ENCODE measurements at regions of chr4 and their contacts with region 1.

Region 1: GRCh38 chr4:158856852-158857251 is 88.0 kb downstream of the FNIP2 start:
- DNase-seq: peak; percentile 52
- ATAC-seq: peak; percentile 88
- H3K4me3 ChIP-seq: no peak overlapping the region
- H3K27ac ChIP-seq: no peak overlapping the region
- H3K4me1 ChIP-seq: peaks cover 23% of the 10 kb centered on the region
- H3K27me3 ChIP-seq: no peaks in the 10 kb centered on the region
- CTCF ChIP-seq: peak; percentile 69

Region 2: DNA sequence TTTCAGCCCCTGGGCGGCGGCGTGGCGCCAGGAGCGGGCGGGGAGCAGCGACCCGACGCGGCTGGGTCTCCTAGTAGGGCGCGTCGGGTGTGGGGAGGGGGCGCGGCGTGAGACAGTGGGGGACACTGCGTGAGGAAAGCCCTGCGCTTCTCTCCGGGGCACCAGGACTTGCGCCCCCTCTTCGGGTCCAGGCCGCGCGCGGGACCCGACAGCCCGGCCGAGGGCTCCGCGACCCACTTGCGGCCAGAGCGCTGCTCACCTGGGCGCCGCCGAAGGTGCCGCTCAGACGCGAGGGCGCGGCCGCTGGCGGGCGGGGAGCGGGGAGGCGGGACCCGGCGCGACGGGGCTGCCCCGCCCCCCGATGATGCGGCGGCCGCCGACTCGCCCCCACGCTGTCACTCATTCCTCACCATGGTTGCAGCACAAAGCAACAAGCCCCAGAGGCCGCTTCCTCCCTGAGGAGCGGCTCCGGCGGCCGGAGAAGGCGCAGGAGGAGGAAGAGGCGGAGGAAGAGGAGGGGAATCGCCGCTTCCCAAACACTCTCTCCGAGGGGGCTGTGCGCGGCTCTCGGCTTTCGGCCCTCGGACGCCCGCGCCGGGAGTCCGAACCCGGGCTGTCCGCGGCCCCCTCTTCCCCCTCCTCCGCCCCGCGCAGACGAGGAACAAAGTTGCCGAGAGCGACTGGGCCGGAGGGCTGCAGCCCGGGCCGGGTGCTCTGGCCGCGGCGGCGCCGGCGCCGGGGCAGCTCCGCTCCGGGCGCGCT is 246.0 kb after region 1 on chr4 and contains the start of gene RAPGEF2:
- CTCF ChIA-PET with region 1: no interaction called
- POLR2A ChIA-PET with region 1: no interaction called
- intact Hi-C with region 1: loop called (anchors 2 kb)
- DNase-seq: peak; percentile 91
- ATAC-seq: peak; percentile 84
- H3K4me3 ChIP-seq: peak within 1 kb of the TSS; percentile 91
- H3K27ac ChIP-seq: 0 out of 2 replicates have a peak within 1 kb of the TSS, but pooled peaks have one; percentile 10
- H3K4me1 ChIP-seq: peaks cover 33% of the 10 kb centered on the region
- H3K27me3 ChIP-seq: no peaks in the 10 kb centered on the region
- CTCF ChIP-seq: no peak
- total RNA-seq, gene RAPGEF2: 21.2 and 21.7 TPM in 2 replicates

Region 3: DNA sequence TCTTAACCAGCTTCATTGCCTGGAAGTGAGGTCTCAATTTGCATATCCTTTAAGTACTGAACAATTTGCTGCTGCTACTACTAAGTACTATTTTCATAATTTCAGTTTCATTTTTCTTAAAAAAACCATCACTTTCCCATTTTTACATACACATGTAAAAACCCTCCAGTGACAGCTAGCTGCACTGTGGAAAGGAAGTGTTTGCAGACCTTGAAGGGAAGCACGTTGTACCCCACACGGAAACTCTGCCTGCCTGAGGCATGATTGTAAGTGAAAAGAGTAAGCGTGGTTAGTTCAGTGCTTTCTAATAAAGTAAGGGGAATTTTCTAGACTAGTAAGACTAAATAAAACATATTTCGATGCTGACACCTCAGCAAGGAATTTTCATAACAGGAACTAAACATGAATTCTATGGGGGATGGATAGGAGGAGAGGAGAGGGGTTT is 349.6 kb after region 1 on chr4:
- CTCF ChIA-PET with region 1: interaction called, 7 read pairs
- POLR2A ChIA-PET with region 1: no interaction called
- intact Hi-C with region 1: loop called (anchors 1 kb)
- DNase-seq: peak; percentile 35
- ATAC-seq: peak; percentile 57
- H3K4me3 ChIP-seq: no peak overlapping the region
- H3K27ac ChIP-seq: no peak overlapping the region; the same call in 1 of the 2 replicates
- H3K4me1 ChIP-seq: peaks cover 12% of the 10 kb centered on the region
- H3K27me3 ChIP-seq: no peaks in the 10 kb centered on the region
- CTCF ChIP-seq: no peak

Region 4: DNA sequence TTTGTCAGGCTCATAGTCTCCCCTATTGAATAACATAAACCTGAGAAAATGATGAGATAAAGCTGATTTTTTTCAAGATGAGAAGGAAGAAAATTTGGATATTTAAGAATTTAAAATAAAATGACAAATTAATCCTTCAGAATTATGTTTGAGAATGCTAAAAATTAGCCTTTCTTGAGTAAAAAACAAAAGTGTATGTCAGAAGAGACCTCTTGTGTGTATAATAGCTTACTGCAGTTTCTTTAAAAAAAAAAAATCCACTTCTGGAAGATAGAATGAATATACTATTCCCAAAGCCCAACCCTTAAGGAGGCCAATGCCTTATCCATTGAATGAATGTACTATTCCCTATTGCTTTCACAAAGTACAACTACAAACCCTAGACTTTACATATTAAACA is 527.8 kb after region 1 on chr4:
- CTCF ChIA-PET with region 1: no interaction called
- POLR2A ChIA-PET with region 1: no interaction called
- intact Hi-C with region 1: loop called (anchors 10 kb)
- DNase-seq: no peak
- ATAC-seq: no peak
- H3K4me3 ChIP-seq: no peak overlapping the region
- H3K27ac ChIP-seq: no peak overlapping the region
- H3K4me1 ChIP-seq: no peaks in the 10 kb centered on the region
- H3K27me3 ChIP-seq: no peaks in the 10 kb centered on the region
- CTCF ChIP-seq: no peak; the same call in 1 of the 2 replicates

Region 5: GRCh38 chr4:159446266-159446976 is 589.6 kb after region 1 on chr4:
- CTCF ChIA-PET with region 1: no interaction called
- POLR2A ChIA-PET with region 1: no interaction called
- intact Hi-C with region 1: loop called (anchors 5 kb)
- DNase-seq: peak; percentile 80
- ATAC-seq: peak; percentile 100
- H3K4me3 ChIP-seq: no peak overlapping the region
- H3K27ac ChIP-seq: no peak overlapping the region
- H3K4me1 ChIP-seq: peaks cover 3% of the 10 kb centered on the region; the same call in 1 of the 2 replicates
- H3K27me3 ChIP-seq: no peaks in the 10 kb centered on the region
- CTCF ChIP-seq: peak; percentile 88

Measured in PC-3 (cell line).